BJ (cell line): ENCODE measurements at regions of chr2 and their contacts with region 1.

Region 1: GRCh38 chr2:70919672-70920366 is 15.9 kb upstream of the ATP6V1B1 start:
- DNase-seq: peak; percentile 27
- H3K4me3 ChIP-seq: no peak overlapping the region
- H3K27me3 ChIP-seq: no peaks in the 10 kb centered on the region
- CTCF ChIP-seq: peak; percentile 92

Region 2: DNA sequence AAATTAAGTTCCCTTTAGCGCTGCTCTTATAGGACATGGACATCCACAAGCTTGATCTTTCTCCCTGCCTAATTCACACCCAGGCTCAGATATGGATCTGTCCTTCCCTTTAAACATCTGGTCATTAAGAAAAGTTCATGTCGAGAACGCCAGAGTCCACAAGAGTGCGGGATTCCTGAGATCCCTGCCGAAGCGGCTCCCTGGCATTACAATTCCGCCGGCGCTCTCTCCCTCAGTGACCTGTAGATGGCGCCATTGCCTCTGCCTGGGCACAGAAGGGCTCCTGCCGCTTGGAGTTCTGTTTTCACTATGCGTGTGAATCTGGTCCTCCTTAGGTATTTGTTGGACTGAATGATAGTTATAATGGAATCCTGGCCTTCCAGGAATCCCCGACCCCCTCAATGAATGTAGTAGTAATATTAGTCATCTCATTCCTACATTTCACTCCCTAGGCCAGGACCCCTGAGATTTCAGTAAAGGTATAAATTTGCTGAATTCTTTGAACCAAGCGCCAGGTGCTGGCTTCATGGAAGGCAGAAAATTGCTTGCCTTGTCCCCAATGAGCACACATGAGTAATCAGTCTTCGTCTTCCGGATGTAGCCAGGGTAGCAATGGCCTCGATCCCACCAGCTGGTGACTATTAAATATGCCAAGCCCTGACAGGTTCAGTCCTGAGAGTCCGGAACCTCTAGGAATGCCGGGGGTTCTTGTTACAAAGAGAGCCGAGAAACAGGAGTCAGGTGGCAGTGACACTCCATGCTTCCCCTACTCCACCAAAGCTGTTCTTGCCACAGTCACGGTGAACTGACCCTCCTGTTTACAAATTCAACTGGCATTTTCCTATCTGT is 57.8 kb before region 1 on chr2:
- CTCF ChIA-PET with region 1: interaction called, 18 read pairs
- POLR2A ChIA-PET with region 1: no interaction called
- DNase-seq: peak; percentile 13
- H3K4me3 ChIP-seq: no peak overlapping the region
- H3K27me3 ChIP-seq: peaks cover 17% of the 10 kb centered on the region
- CTCF ChIP-seq: peak; percentile 98

Region 3: GRCh38 chr2:70907130-70908057 is 12.4 kb before region 1 on chr2:
- CTCF ChIA-PET with region 1: interaction called, 12 read pairs
- POLR2A ChIA-PET with region 1: no interaction called
- DNase-seq: no peak
- H3K4me3 ChIP-seq: peak overlapping the region; percentile 14; the same call in 1 of the 2 replicates
- H3K27me3 ChIP-seq: peaks cover 4% of the 10 kb centered on the region
- CTCF ChIP-seq: no peak